Heart left ventricle (tissue), 16 donors: ENCODE measurements at regions of chr6 and their contacts with region 1.

Region 1: GRCh38 chr6:1609648-1610496 is at the start of gene FOXC1:
- DNase-seq: peak; percentile 89 to 93 (median 90)
- ATAC-seq: peak; percentile 84 to 92 (median 90)
- H3K4me3 ChIP-seq: peak within 1 kb of the TSS; percentile 53 to 89 (median 69)
- H3K27ac ChIP-seq: peak within 1 kb of the TSS; percentile 75 to 95 (median 88)
- H3K4me1 ChIP-seq: peaks cover 0 to 55% (median 6%) of the 10 kb centered on the region in 12 donors
- H3K27me3 ChIP-seq: peaks cover 28 to 90% (median 65%) of the 10 kb centered on the region in 9 donors
- CTCF ChIP-seq: no peak
- POLR2A ChIP-seq: peak in 1 of 2 donors; percentile 81
- total RNA-seq, gene FOXC1: 1.8 to 6.3 (median 3.5) TPM

Region 2: DNA sequence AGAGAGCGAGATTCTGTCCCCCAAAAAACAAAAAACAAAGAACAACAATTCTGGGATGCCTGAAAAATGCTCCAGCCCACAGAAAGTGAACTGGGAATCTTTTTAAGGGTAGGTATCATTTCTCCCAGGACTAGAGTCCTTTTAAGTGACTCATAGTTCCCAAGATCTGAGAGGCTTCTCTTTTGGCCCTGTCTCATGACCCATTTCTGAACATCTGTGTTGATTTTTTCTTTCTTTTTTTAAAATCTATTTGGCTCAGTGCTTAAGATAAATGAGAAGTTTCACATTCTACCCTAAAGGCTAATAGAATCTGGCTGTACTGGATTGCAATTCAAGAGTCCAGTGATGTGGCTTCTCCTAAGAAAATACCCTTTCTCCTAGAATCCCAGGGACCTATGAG is 515.6 kb before region 1 on chr6:
- intact Hi-C with region 1: no loop called
- DNase-seq: no peak
- ATAC-seq: peak in 2 of 4 donors; percentile 48 to 82
- H3K4me3 ChIP-seq: no peak overlapping the region
- H3K27ac ChIP-seq: peak overlapping the region in 2 of 12 donors; percentile 11 to 24
- H3K4me1 ChIP-seq: peaks cover 0 to 6% (median 0%) of the 10 kb centered on the region in 12 donors
- H3K27me3 ChIP-seq: peaks cover 0 to 5% (median 0%) of the 10 kb centered on the region in 9 donors
- CTCF ChIP-seq: no peak
- POLR2A ChIP-seq: no peak

Region 3: DNA sequence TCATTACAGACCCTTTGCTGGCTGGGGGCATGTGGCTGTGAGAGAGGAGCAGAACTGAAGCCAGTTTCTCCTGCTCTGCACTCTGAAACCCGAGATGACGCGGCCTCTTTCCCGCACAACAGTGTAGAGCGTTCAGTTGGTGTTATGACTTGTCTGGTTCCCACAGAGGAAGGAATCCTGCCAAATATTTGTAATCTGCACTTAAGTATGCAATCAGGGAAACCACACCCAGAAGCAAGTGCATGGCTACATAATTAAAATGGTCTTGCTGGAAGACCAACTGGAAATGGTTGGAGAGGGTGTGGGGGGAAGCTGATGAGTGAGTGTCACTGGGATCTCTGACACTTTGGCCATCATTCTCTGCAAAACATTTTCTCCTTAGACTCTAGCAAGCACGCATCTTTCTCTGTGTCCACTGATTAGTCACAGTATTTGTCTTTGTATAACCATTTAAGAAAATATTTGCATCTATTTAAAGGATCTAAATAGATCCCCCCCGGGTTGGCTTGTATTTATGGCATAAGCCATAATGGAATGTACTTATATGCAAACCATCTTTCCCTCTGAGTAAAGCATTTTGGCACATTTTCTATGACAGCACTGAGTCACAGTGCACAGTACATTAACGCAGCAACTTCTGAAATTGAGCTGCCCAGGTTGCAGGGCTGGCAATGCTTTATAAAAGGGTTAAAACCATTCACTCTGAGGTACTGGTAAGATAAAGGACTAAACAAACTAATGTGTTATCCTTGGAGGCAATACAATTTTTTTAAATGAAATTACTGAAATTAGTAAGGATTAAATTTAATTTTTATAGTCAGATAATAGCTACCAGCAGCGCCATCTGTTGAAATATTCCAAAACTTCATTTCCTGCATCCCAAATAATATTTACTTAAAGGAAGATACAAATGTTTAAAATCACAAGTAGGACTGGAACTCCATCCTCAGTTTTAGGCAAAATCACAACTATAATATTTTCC is 76.5 kb after region 1 on chr6:
- intact Hi-C with region 1: loop called in 6 of 10 experiments (anchors 2 to 5 kb)
- DNase-seq: peak in 3 of 5 donors; percentile 25 to 49 (median 38)
- ATAC-seq: peak; percentile 48 to 87 (median 84)
- H3K4me3 ChIP-seq: no peak overlapping the region
- H3K27ac ChIP-seq: peak overlapping the region in 6 of 12 donors; percentile 13 to 59 (median 34)
- H3K4me1 ChIP-seq: peaks cover 0 to 17% (median 13%) of the 10 kb centered on the region in 12 donors
- H3K27me3 ChIP-seq: no peaks in the 10 kb centered on the region
- CTCF ChIP-seq: peak in 10 of 12 donors; percentile 13 to 52 (median 32)
- POLR2A ChIP-seq: no peak

Region 4: GRCh38 chr6:1821513-1822183 is 211.8 kb after region 1 on chr6:
- intact Hi-C with region 1: loop called in 1 of 10 experiments (anchors 10 kb)
- DNase-seq: peak in 1 of 5 donors; percentile 30
- ATAC-seq: peak in 2 of 4 donors; percentile 34 to 50
- H3K4me3 ChIP-seq: peak overlapping the region in 8 of 12 donors; percentile 11 to 48 (median 26)
- H3K27ac ChIP-seq: peak overlapping the region in 5 of 12 donors; percentile 6 to 56 (median 41)
- H3K4me1 ChIP-seq: peaks cover 0 to 32% (median 7%) of the 10 kb centered on the region in 12 donors
- H3K27me3 ChIP-seq: no peaks in the 10 kb centered on the region
- CTCF ChIP-seq: no peak
- POLR2A ChIP-seq: no peak

Region 5: GRCh38 chr6:2037237-2037926 is 427.5 kb after region 1 on chr6:
- intact Hi-C with region 1: loop called in 1 of 10 experiments (anchors 10 kb)
- DNase-seq: no peak
- ATAC-seq: no peak
- H3K4me3 ChIP-seq: no peak overlapping the region
- H3K27ac ChIP-seq: no peak overlapping the region
- H3K4me1 ChIP-seq: no peaks in the 10 kb centered on the region
- H3K27me3 ChIP-seq: no peaks in the 10 kb centered on the region
- CTCF ChIP-seq: peak in 5 of 12 donors; percentile 9 to 23 (median 21)
- POLR2A ChIP-seq: no peak

Region 6: DNA sequence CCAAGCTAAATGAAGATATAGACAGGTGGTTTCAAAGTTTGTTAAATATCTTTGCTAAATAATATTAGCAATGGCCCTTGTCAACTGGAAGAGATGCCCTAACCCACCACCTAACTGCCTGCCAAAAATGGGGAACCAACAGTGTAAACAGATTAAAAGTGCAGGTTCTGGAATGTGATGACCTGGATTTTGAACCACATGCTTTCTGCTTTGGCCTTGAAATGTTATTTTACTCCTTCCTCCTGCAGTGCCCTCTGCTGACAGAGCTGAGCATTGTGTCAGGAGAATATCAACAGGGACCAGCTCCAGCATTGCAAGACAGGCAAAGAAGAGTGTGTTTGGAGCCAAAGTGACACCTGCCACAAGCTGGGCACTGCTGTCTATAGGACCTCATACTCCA is 914.2 kb after region 1 on chr6:
- intact Hi-C with region 1: no loop called
- DNase-seq: no peak
- ATAC-seq: no peak
- H3K4me3 ChIP-seq: no peak overlapping the region
- H3K27ac ChIP-seq: no peak overlapping the region
- H3K4me1 ChIP-seq: peaks cover 0 to 9% (median 0%) of the 10 kb centered on the region in 12 donors
- H3K27me3 ChIP-seq: peaks cover 0 to 8% (median 0%) of the 10 kb centered on the region in 9 donors
- CTCF ChIP-seq: peak in 1 of 12 donors; percentile 5
- POLR2A ChIP-seq: no peak

Region 7: GRCh38 chr6:2695454-2696095 is 1085.7 kb after region 1 on chr6:
- intact Hi-C with region 1: loop called in 2 of 10 experiments (anchors 2 to 5 kb)
- DNase-seq: no peak
- ATAC-seq: peak in 3 of 4 donors; percentile 49 to 61 (median 60)
- H3K4me3 ChIP-seq: no peak overlapping the region
- H3K27ac ChIP-seq: no peak overlapping the region
- H3K4me1 ChIP-seq: no peaks in the 10 kb centered on the region
- H3K27me3 ChIP-seq: no peaks in the 10 kb centered on the region
- CTCF ChIP-seq: peak in 11 of 12 donors; percentile 9 to 63 (median 44)
- POLR2A ChIP-seq: no peak